Endothelial cell of umbilical vein (primary cell): ENCODE measurements at regions of chr6 and their contacts with region 1.

Region 1: DNA sequence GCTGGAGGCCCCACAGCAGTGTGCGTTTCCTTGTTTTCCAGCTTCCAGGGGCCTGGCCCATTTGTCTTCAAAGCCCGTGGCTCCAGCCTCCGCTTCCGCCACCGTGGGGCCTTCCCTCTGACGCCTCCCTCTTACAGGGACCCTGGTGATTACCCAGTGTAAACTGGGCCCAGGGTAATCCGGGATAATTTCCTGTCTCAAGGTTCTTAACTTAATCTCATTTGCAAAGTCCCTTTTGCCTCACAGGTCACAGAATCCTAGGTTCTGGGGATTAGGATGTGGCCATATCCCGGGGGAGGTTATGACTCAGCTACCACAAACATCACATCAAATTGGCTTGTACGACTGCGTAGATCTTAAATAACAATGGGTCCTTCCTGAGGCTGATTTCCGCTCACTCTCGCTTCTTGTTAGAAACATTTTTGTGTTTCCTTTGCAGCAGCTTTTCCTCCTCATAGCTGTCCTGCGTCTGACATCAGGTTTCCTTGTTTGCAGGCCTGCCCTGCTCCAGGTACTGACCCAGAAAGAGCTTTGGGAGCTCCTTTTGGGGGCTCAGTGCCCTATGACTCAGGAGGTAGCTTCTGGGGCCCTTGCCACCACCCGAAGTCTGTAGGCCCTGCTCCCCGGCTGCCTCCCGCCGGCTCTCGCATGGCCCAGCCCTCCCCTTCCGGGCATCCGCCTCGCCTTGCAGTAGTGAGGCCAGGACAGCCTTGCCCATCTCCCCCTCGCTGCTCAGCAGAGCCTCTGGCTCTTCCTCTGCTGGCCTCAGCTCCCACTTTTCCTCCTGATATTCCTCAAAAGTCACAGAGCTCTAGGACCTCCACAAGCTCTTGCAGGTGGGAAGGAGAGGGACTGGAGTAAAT is 100.5 kb downstream of the ERMARD start:
- DNase-seq: peak; percentile 93
- H3K4me3 ChIP-seq: peak overlapping the region in 1 of 3 experiments; percentile 6
- H3K27ac ChIP-seq: peak overlapping the region; percentile 95
- H3K4me1 ChIP-seq: peaks cover 24% of the 10 kb centered on the region
- H3K27me3 ChIP-seq: no peaks in the 10 kb centered on the region
- CTCF ChIP-seq: no peak
- POLR2A ChIP-seq: peak; percentile 58

Region 2: GRCh38 chr6:169669889-169670288 is 182.0 kb before region 1 on chr6:
- CTCF ChIA-PET with region 1: no interaction called
- POLR2A ChIA-PET with region 1: no interaction called
- dilution Hi-C with region 1: no loop called
- intact Hi-C with region 1: no loop called
- DNase-seq: peak; percentile 98
- H3K4me3 ChIP-seq: no peak overlapping the region
- H3K27ac ChIP-seq: peak overlapping the region; percentile 98
- H3K4me1 ChIP-seq: peaks cover 26% of the 10 kb centered on the region
- H3K27me3 ChIP-seq: no peaks in the 10 kb centered on the region
- CTCF ChIP-seq: no peak
- POLR2A ChIP-seq: no peak

Region 3: DNA sequence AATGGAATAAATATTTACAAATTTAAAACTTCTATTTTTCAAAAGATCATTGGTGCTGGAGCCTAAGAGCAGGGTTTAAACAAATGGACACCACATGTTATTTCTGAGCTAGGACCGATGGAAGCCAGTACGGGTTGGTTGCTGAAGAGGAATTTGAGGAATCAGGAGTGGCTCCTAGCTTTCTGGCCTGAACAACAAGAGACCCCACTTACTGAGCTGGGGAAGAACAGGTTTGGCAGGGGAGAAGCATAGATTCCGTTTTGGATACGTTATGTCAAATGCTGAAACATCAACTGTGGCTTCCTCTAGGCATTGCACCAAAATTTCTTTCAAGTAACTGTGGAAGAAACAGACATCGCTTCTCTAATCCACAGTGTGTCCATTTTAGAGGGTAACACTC is 156.7 kb before region 1 on chr6:
- CTCF ChIA-PET with region 1: no interaction called
- POLR2A ChIA-PET with region 1: no interaction called
- dilution Hi-C with region 1: no loop called
- intact Hi-C with region 1: loop called (anchors 5 kb)
- DNase-seq: no peak
- H3K4me3 ChIP-seq: no peak overlapping the region
- H3K27ac ChIP-seq: no peak overlapping the region
- H3K4me1 ChIP-seq: peaks cover 28% of the 10 kb centered on the region
- H3K27me3 ChIP-seq: no peaks in the 10 kb centered on the region
- CTCF ChIP-seq: no peak
- POLR2A ChIP-seq: no peak

Region 4: GRCh38 chr6:169780571-169781091 is 71.2 kb before region 1 on chr6:
- CTCF ChIA-PET with region 1: no interaction called
- POLR2A ChIA-PET with region 1: no interaction called
- dilution Hi-C with region 1: no loop called
- intact Hi-C with region 1: no loop called
- DNase-seq: peak; percentile 28
- H3K4me3 ChIP-seq: no peak overlapping the region
- H3K27ac ChIP-seq: no peak overlapping the region
- H3K4me1 ChIP-seq: peaks cover 10% of the 10 kb centered on the region
- H3K27me3 ChIP-seq: no peaks in the 10 kb centered on the region
- CTCF ChIP-seq: no peak
- POLR2A ChIP-seq: no peak

Region 5: GRCh38 chr6:169905041-169905807 is 53.4 kb after region 1 on chr6:
- CTCF ChIA-PET with region 1: interaction called, 11 read pairs
- POLR2A ChIA-PET with region 1: no interaction called
- dilution Hi-C with region 1: no loop called
- intact Hi-C with region 1: loop called (anchors 1 kb)
- DNase-seq: peak; percentile 99
- H3K4me3 ChIP-seq: no peak overlapping the region
- H3K27ac ChIP-seq: peak overlapping the region; percentile 75
- H3K4me1 ChIP-seq: peaks cover 28% of the 10 kb centered on the region
- H3K27me3 ChIP-seq: no peaks in the 10 kb centered on the region
- CTCF ChIP-seq: no peak
- POLR2A ChIP-seq: peak; percentile 74

Region 6: GRCh38 chr6:170295510-170296422 is 443.9 kb after region 1 on chr6:
- CTCF ChIA-PET with region 1: interaction called, 3 read pairs
- POLR2A ChIA-PET with region 1: no interaction called
- dilution Hi-C with region 1: no loop called
- intact Hi-C with region 1: loop called (anchors 5 kb)
- DNase-seq: peak; percentile 21
- H3K4me3 ChIP-seq: peak overlapping the region; percentile 14 to 36 (median 34)
- H3K27ac ChIP-seq: no peak overlapping the region
- H3K4me1 ChIP-seq: peaks cover 17% of the 10 kb centered on the region
- H3K27me3 ChIP-seq: peaks cover 29 to 62% of the 10 kb centered on the region in 2 experiments
- CTCF ChIP-seq: no peak
- POLR2A ChIP-seq: no peak

Region 7: GRCh38 chr6:170554013-170554795 is 702.3 kb after region 1 on chr6 and contains the start of gene TBP:
- CTCF ChIA-PET with region 1: no interaction called
- POLR2A ChIA-PET with region 1: no interaction called
- dilution Hi-C with region 1: no loop called
- intact Hi-C with region 1: loop called (anchors 1 kb)
- DNase-seq: peak; percentile 97
- H3K4me3 ChIP-seq: peak within 1 kb of the TSS; percentile 76 to 89 (median 81)
- H3K27ac ChIP-seq: peak within 1 kb of the TSS; percentile 84
- H3K4me1 ChIP-seq: peaks cover 22% of the 10 kb centered on the region
- H3K27me3 ChIP-seq: no peaks in the 10 kb centered on the region
- CTCF ChIP-seq: no peak
- POLR2A ChIP-seq: peak; percentile 86
- total RNA-seq, gene TBP: 15.3 and 17.7 TPM in 2 replicates